CD4-positive, alpha-beta T cell (primary cell): ENCODE measurements at regions of chr1 and their contacts with region 1.

Region 1: DNA sequence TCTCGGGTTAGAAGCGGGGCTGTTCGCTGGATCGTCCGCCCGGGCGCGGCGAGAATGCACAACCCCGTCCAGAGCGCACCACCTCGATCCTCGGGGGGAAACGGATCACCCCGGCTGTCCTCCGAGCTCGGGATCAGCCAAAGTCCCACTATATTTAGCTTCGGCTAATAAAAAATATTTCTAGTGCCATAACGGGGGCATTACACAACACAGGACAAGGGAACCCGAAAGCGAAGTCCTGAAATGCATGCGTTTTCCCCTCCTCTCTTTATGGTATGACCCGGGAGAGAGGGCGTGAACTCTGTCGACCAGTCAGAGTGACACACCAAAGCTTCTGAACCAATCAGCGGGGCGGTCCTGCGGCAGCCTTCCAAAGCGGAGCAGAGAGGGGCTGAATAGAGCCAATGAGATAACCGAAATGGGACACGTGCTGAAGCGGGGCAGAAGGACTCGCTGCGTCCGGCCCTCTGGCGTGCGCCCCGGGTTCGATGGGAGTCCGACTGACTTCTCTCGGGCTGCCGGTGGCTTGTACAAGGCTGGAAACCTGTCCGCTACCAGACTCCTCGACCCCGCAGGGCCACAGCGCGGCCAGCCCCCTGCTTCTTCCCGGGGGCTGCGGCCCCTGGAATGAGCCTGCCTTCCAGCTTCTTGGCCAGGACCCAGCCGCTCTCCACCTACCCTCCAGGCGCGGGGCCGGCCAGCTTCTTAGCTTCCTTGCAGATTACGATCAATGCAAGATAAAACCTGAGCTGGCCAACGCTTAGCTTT is at the start of gene ALDH4A1:
- DNase-seq: peak; percentile 83 to 97 (median 89)
- ATAC-seq: peak; percentile 97
- H3K4me3 ChIP-seq: peak within 1 kb of the TSS; percentile 81
- H3K4me3 Mint-ChIP-seq: peak within 1 kb of the TSS; percentile 91
- H3K27ac ChIP-seq: peak within 1 kb of the TSS; percentile 34 to 87
- H3K27ac Mint-ChIP-seq: peak within 1 kb of the TSS; percentile 96
- H3K4me1 ChIP-seq: peaks cover 39% of the 10 kb centered on the region
- H3K4me1 Mint-ChIP-seq: peaks cover 37% of the 10 kb centered on the region
- H3K27me3 ChIP-seq: no peaks in the 10 kb centered on the region
- H3K27me3 Mint-ChIP-seq: no peaks in the 10 kb centered on the region
- CTCF ChIP-seq: no peak
- total RNA-seq, gene ALDH4A1: 0.61 to 0.71 TPM

Region 2: GRCh38 chr1:18913065-18913835 is 10.5 kb after region 1 on chr1:
- CTCF ChIA-PET with region 1: interaction called, 27 read pairs
- POLR2A ChIA-PET with region 1: interaction called, 6 read pairs
- intact Hi-C with region 1: no loop called
- DNase-seq: peak; percentile 56 to 87 (median 70)
- ATAC-seq: peak; percentile 86
- H3K4me3 ChIP-seq: no peak overlapping the region
- H3K4me3 Mint-ChIP-seq: no peak overlapping the region
- H3K27ac ChIP-seq: no peak overlapping the region
- H3K27ac Mint-ChIP-seq: peak overlapping the region; percentile 16
- H3K4me1 ChIP-seq: peaks cover 14% of the 10 kb centered on the region
- H3K4me1 Mint-ChIP-seq: peaks cover 6% of the 10 kb centered on the region
- H3K27me3 ChIP-seq: no peaks in the 10 kb centered on the region
- H3K27me3 Mint-ChIP-seq: no peaks in the 10 kb centered on the region
- CTCF ChIP-seq: peak; percentile 95

Region 3: GRCh38 chr1:18949686-18950400 is 47.1 kb after region 1 on chr1:
- CTCF ChIA-PET with region 1: interaction called, 8 read pairs
- POLR2A ChIA-PET with region 1: interaction called, 30 read pairs
- intact Hi-C with region 1: no loop called
- DNase-seq: peak in 3 of 14 experiments; percentile 30 to 57 (median 49)
- ATAC-seq: no peak
- H3K4me3 ChIP-seq: peak overlapping the region; percentile 50
- H3K4me3 Mint-ChIP-seq: peak overlapping the region; percentile 99
- H3K27ac ChIP-seq: peak overlapping the region; percentile 95
- H3K27ac Mint-ChIP-seq: peak overlapping the region; percentile 99
- H3K4me1 ChIP-seq: peaks cover 100% of the 10 kb centered on the region
- H3K4me1 Mint-ChIP-seq: peaks cover 97% of the 10 kb centered on the region
- H3K27me3 ChIP-seq: no peaks in the 10 kb centered on the region
- H3K27me3 Mint-ChIP-seq: no peaks in the 10 kb centered on the region
- CTCF ChIP-seq: no peak

Region 4: GRCh38 chr1:18962121-18962721 is 59.5 kb after region 1 on chr1:
- CTCF ChIA-PET with region 1: interaction called, 16 read pairs
- POLR2A ChIA-PET with region 1: interaction called, 30 read pairs
- intact Hi-C with region 1: loop called in 1 of 2 experiments (anchors 2 kb)
- DNase-seq: no peak
- ATAC-seq: no peak
- H3K4me3 ChIP-seq: no peak overlapping the region
- H3K4me3 Mint-ChIP-seq: no peak overlapping the region
- H3K27ac ChIP-seq: no peak overlapping the region
- H3K27ac Mint-ChIP-seq: no peak overlapping the region
- H3K4me1 ChIP-seq: peaks cover 15% of the 10 kb centered on the region
- H3K4me1 Mint-ChIP-seq: peaks cover 26% of the 10 kb centered on the region
- H3K27me3 ChIP-seq: no peaks in the 10 kb centered on the region
- H3K27me3 Mint-ChIP-seq: no peaks in the 10 kb centered on the region
- CTCF ChIP-seq: no peak

Region 5: GRCh38 chr1:19074902-19075721 is 172.4 kb after region 1 on chr1:
- CTCF ChIA-PET with region 1: interaction called, 4 read pairs
- POLR2A ChIA-PET with region 1: interaction called, 24 read pairs
- intact Hi-C with region 1: loop called (anchors 2 to 5 kb)
- DNase-seq: peak in 1 of 14 experiments; percentile 23
- ATAC-seq: peak; percentile 19
- H3K4me3 ChIP-seq: peak overlapping the region; percentile 25
- H3K4me3 Mint-ChIP-seq: peak overlapping the region; percentile 72
- H3K27ac ChIP-seq: no peak overlapping the region
- H3K27ac Mint-ChIP-seq: peak overlapping the region; percentile 83
- H3K4me1 ChIP-seq: peaks cover 58% of the 10 kb centered on the region
- H3K4me1 Mint-ChIP-seq: peaks cover 63% of the 10 kb centered on the region
- H3K27me3 ChIP-seq: no peaks in the 10 kb centered on the region
- H3K27me3 Mint-ChIP-seq: no peaks in the 10 kb centered on the region
- CTCF ChIP-seq: no peak

Region 6: GRCh38 chr1:19251305-19252196 is 348.8 kb after region 1 on chr1 and contains the starts of genes EMC1 and MRTO4:
- CTCF ChIA-PET with region 1: no interaction called
- POLR2A ChIA-PET with region 1: interaction called, 6 read pairs
- intact Hi-C with region 1: loop called in 1 of 2 experiments (anchors 2 kb)
- DNase-seq: peak; percentile 79 to 92 (median 86)
- ATAC-seq: peak; percentile 93
- H3K4me3 ChIP-seq: peak within 1 kb of the TSS; percentile 80
- H3K4me3 Mint-ChIP-seq: peak within 1 kb of the TSS; percentile 96
- H3K27ac ChIP-seq: peak within 1 kb of the TSS; percentile 93 to 95
- H3K27ac Mint-ChIP-seq: peak within 1 kb of the TSS; percentile 94
- H3K4me1 ChIP-seq: peaks cover 40% of the 10 kb centered on the region
- H3K4me1 Mint-ChIP-seq: peaks cover 34% of the 10 kb centered on the region
- H3K27me3 ChIP-seq: no peaks in the 10 kb centered on the region
- H3K27me3 Mint-ChIP-seq: no peaks in the 10 kb centered on the region
- CTCF ChIP-seq: no peak
- total RNA-seq, gene EMC1: 21.9 to 22.2 TPM
- total RNA-seq, gene MRTO4: 10.2 to 12.0 TPM

Region 7: DNA sequence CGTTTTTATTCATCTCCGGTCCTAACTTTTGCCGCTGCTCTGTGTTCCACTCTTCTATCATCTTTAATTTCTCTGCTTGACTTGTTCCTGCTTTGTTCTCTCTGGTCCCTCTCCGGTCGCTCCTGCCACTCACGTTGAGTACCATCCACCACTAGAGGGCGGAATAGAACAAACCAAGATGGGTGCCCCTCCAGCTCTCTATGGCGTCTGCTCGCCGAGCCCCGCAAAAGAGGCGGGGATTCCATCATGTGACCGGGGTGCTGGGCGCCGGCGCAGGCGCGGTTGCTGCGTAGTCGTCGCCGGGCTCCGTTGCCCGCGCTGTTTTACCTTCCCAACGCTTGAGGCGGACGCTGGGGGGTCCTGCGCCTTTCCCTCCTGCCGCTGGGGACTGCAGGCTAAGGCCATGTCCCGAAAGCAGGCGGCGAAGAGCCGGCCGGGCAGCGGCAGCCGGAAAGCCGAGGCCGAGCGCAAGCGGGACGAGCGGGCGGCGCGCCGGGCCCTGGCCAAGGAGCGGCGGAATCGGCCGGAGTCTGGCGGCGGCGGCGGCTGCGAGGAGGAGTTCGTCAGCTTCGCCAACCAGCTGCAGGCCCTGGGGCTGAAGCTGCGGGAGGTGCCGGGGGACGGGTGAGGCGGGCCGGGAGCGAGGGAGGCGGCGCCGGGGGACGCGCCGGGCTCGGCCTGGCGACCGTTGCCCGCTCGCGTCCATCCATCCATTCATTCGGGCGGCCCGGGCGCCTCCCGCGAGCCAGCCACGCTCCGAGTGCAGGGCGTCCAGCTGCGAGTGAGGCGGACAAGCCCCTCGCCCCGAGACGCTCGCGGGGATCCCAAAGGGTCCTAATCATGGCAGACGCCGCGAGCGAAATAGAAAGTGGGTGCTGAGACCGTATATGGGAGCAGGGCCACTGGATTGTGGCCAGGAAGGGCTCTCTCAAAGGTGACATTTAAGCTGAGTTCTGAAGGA is 979.7 kb after region 1 on chr1 and contains the start of gene OTUD3:
- CTCF ChIA-PET with region 1: no interaction called
- POLR2A ChIA-PET with region 1: no interaction called
- intact Hi-C with region 1: loop called in 1 of 2 experiments (anchors 10 kb)
- DNase-seq: peak; percentile 89 to 99 (median 94)
- ATAC-seq: peak; percentile 98
- H3K4me3 ChIP-seq: peak within 1 kb of the TSS; percentile 84
- H3K4me3 Mint-ChIP-seq: peak within 1 kb of the TSS; percentile 91
- H3K27ac ChIP-seq: peak within 1 kb of the TSS in 1 of 2 donors; percentile 55
- H3K27ac Mint-ChIP-seq: peak within 1 kb of the TSS; percentile 65
- H3K4me1 ChIP-seq: peaks cover 19% of the 10 kb centered on the region
- H3K4me1 Mint-ChIP-seq: peaks cover 47% of the 10 kb centered on the region
- H3K27me3 ChIP-seq: no peaks in the 10 kb centered on the region
- H3K27me3 Mint-ChIP-seq: peaks cover 8% of the 10 kb centered on the region
- CTCF ChIP-seq: peak; percentile 90
- total RNA-seq, gene OTUD3: 11.4 to 12.6 TPM